PC-9 (cell line): ENCODE measurements at regions of chr14 and their contacts with region 1.

Region 1: GRCh38 chr14:105086833-105087307 is 21.6 kb upstream of the GPR132 start:
- DNase-seq: peak; percentile 73 to 85
- H3K4me3 ChIP-seq: peak overlapping the region; percentile 80
- H3K27ac ChIP-seq: peak overlapping the region; percentile 80
- H3K4me1 ChIP-seq: peaks cover 43% of the 10 kb centered on the region
- H3K27me3 ChIP-seq: no peaks in the 10 kb centered on the region
- CTCF ChIP-seq: peak; percentile 70

Region 2: GRCh38 chr14:105045710-105046326 is 41.1 kb before region 1 on chr14:
- CTCF ChIA-PET with region 1: interaction called, 16 read pairs
- POLR2A ChIA-PET with region 1: no interaction called
- intact Hi-C with region 1: loop called (anchors 2 kb)
- DNase-seq: peak; percentile 56 to 83
- H3K4me3 ChIP-seq: no peak overlapping the region
- H3K27ac ChIP-seq: no peak overlapping the region
- H3K4me1 ChIP-seq: peaks cover 9% of the 10 kb centered on the region
- H3K27me3 ChIP-seq: no peaks in the 10 kb centered on the region
- CTCF ChIP-seq: peak; percentile 98

Region 3: GRCh38 chr14:105187935-105188524 is 101.2 kb after region 1 on chr14:
- CTCF ChIA-PET with region 1: no interaction called
- POLR2A ChIA-PET with region 1: no interaction called
- intact Hi-C with region 1: loop called (anchors 1 kb)
- DNase-seq: no peak
- H3K4me3 ChIP-seq: no peak overlapping the region
- H3K27ac ChIP-seq: no peak overlapping the region
- H3K4me1 ChIP-seq: 0 out of 2 replicates have a peak, but pooled peaks cover 7% of the 10 kb centered on the region
- H3K27me3 ChIP-seq: peaks cover 13% of the 10 kb centered on the region
- CTCF ChIP-seq: peak; percentile 65

Region 4: GRCh38 chr14:105281371-105282097 is 194.7 kb after region 1 on chr14:
- CTCF ChIA-PET with region 1: no interaction called
- POLR2A ChIA-PET with region 1: no interaction called
- intact Hi-C with region 1: loop called (anchors 2 kb)
- DNase-seq: peak in 1 of 2 experiments; percentile 20
- H3K4me3 ChIP-seq: no peak overlapping the region
- H3K27ac ChIP-seq: no peak overlapping the region
- H3K4me1 ChIP-seq: no peaks in the 10 kb centered on the region
- H3K27me3 ChIP-seq: no peaks in the 10 kb centered on the region
- CTCF ChIP-seq: peak; percentile 69